CD4-positive, alpha-beta memory T cell (primary cell): ENCODE measurements at regions of chr12 and their contacts with region 1.

Region 1: GRCh38 chr12:2890388-2891239 is at the start of gene TULP3:
- DNase-seq: peak; percentile 98 to 99 (median 98)
- H3K4me3 ChIP-seq: peak within 1 kb of the TSS; percentile 49 to 92
- H3K4me3 Mint-ChIP-seq: peak within 1 kb of the TSS; percentile 90 to 99 (median 96)
- H3K27ac ChIP-seq: peak within 1 kb of the TSS; percentile 83
- H3K27ac Mint-ChIP-seq: peak within 1 kb of the TSS; percentile 90 to 99 (median 93)
- H3K4me1 ChIP-seq: peaks cover 17% of the 10 kb centered on the region
- H3K4me1 Mint-ChIP-seq: peaks cover 17 to 37% (median 25%) of the 10 kb centered on the region in 4 donors
- H3K27me3 ChIP-seq: no peaks in the 10 kb centered on the region
- H3K27me3 Mint-ChIP-seq: peaks cover 0 to 2% of the 10 kb centered on the region in 2 donors
- total RNA-seq, gene TULP3: 6.7 to 9.1 TPM

Region 2: DNA sequence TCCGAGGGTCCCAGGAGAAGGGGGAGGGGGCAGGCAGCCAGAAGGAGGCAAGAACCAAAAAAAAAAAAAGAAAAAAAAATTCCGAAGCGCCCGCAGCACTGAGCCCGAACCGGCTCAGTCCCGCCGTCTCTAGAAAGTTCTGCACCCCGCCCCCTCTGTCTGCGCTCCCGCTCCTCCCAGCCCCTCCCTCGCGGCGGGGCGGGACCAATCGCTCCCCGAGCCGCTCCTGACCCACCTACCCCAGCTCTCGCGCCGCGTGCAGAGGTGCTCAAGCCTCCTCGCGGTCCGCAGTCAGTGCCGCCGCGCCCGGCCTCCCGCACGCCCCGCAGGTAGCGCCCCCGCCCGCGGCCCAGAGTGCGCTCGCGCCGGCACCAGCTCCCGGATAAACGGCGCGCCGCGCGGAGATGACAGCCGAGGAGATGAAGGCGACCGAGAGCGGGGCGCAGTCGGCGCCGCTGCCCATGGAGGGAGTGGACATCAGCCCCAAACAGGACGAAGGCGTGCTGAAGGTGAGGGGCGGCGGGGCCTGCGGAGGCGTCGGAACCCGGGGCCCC is 95.8 kb before region 1 on chr12 and contains the start of gene FKBP4:
- CTCF ChIA-PET with region 1: no interaction called
- POLR2A ChIA-PET with region 1: interaction called, 6 read pairs
- intact Hi-C with region 1: loop called (anchors 1 kb)
- DNase-seq: peak; percentile 83 to 92 (median 86)
- H3K4me3 ChIP-seq: peak within 1 kb of the TSS; percentile 81 to 83
- H3K4me3 Mint-ChIP-seq: peak within 1 kb of the TSS; percentile 91 to 97 (median 94)
- H3K27ac ChIP-seq: peak within 1 kb of the TSS; percentile 55
- H3K27ac Mint-ChIP-seq: peak within 1 kb of the TSS; percentile 77 to 96 (median 90)
- H3K4me1 ChIP-seq: peaks cover 11% of the 10 kb centered on the region
- H3K4me1 Mint-ChIP-seq: peaks cover 11 to 36% (median 14%) of the 10 kb centered on the region in 4 donors
- H3K27me3 ChIP-seq: no peaks in the 10 kb centered on the region
- H3K27me3 Mint-ChIP-seq: no peaks in the 10 kb centered on the region
- total RNA-seq, gene FKBP4: 51.3 to 53.3 TPM